Activated CD4-positive, alpha-beta T cell treated with anti-CD3 and anti-CD28 coated beads for 36 hours (primary cell): ENCODE measurements at regions of chr20 and their contacts with region 1.

Region 1: GRCh38 chr20:32336918-32337347 is 21.2 kb upstream of the ASXL1 start:
- DNase-seq: no peak
- ATAC-seq: no peak
- H3K4me3 Mint-ChIP-seq: no peak overlapping the region
- H3K27ac Mint-ChIP-seq: no peak overlapping the region
- H3K4me1 Mint-ChIP-seq: peaks cover 41% of the 10 kb centered on the region
- H3K27me3 Mint-ChIP-seq: no peaks in the 10 kb centered on the region

Region 2: GRCh38 chr20:32231847-32232246 is 105.1 kb before region 1 on chr20:
- CTCF ChIA-PET with region 1: no interaction called
- POLR2A ChIA-PET with region 1: interaction called, 3 read pairs
- intact Hi-C with region 1: loop called (anchors 1 kb)
- DNase-seq: peak; percentile 68
- ATAC-seq: peak; percentile 89
- H3K4me3 Mint-ChIP-seq: peak overlapping the region; percentile 52
- H3K27ac Mint-ChIP-seq: peak overlapping the region; percentile 98
- H3K4me1 Mint-ChIP-seq: peaks cover 42% of the 10 kb centered on the region
- H3K27me3 Mint-ChIP-seq: no peaks in the 10 kb centered on the region

Region 3: GRCh38 chr20:32285621-32286371 is 51.1 kb before region 1 on chr20:
- CTCF ChIA-PET with region 1: interaction called, 7 read pairs
- POLR2A ChIA-PET with region 1: interaction called, 9 read pairs
- intact Hi-C with region 1: loop called (anchors 1 to 2 kb)
- DNase-seq: peak; percentile 70
- ATAC-seq: peak; percentile 83
- H3K4me3 Mint-ChIP-seq: peak overlapping the region; percentile 58
- H3K27ac Mint-ChIP-seq: peak overlapping the region; percentile 97
- H3K4me1 Mint-ChIP-seq: peaks cover 88% of the 10 kb centered on the region
- H3K27me3 Mint-ChIP-seq: no peaks in the 10 kb centered on the region

Region 4: GRCh38 chr20:32352121-32352720 is 15.3 kb after region 1 on chr20:
- CTCF ChIA-PET with region 1: interaction called, 8 read pairs
- POLR2A ChIA-PET with region 1: interaction called, 4 read pairs
- intact Hi-C with region 1: loop called (anchors 1 kb)
- DNase-seq: no peak
- ATAC-seq: no peak
- H3K4me3 Mint-ChIP-seq: no peak overlapping the region
- H3K27ac Mint-ChIP-seq: no peak overlapping the region
- H3K4me1 Mint-ChIP-seq: peaks cover 32% of the 10 kb centered on the region
- H3K27me3 Mint-ChIP-seq: no peaks in the 10 kb centered on the region

Region 5: DNA sequence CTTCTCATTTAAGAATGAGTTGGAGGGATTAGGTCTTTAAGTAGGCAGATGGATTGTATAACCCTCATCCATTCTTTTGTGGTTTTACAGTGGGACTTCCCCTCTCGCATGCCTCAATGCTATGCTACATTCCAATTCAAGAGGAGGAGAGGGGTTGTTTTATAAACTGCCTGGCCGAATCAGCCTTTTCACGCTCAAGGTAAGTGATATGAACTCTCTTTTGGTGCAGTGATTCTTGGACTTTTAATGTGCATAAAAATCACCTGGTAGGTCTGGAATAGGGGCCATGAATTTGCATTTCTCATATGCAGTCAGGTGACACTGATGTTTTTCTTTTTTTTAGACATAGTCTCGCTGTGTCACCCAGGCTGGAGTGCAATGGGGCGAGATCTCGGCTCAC is 32.0 kb after region 1 on chr20:
- CTCF ChIA-PET with region 1: no interaction called
- POLR2A ChIA-PET with region 1: no interaction called
- intact Hi-C with region 1: loop called (anchors 5 kb)
- DNase-seq: no peak
- ATAC-seq: peak; percentile 47
- H3K4me3 Mint-ChIP-seq: no peak overlapping the region
- H3K27ac Mint-ChIP-seq: peak overlapping the region; percentile 43
- H3K4me1 Mint-ChIP-seq: peaks cover 49% of the 10 kb centered on the region
- H3K27me3 Mint-ChIP-seq: no peaks in the 10 kb centered on the region

Region 6: DNA sequence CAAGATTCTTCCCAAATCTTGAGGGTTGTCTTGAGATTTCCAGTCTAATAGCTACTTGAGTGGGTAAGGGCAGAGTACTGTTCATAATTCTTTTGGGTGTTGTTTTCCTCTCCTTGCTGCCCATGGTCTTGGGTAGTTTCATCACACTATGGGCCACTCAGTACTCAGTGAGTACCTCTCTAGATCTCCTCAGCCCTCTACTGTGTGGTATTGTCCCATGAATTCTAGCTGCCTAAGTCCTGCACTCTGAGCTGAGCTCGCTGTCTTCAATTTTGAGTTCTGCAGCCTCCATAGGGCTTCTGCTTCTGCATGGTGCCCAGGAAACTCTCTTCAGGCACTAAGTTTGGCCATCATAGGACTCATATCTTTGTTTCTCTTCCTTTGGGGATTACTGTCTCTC is 63.5 kb after region 1 on chr20:
- CTCF ChIA-PET with region 1: no interaction called
- POLR2A ChIA-PET with region 1: no interaction called
- intact Hi-C with region 1: no loop called
- DNase-seq: no peak
- ATAC-seq: no peak
- H3K4me3 Mint-ChIP-seq: no peak overlapping the region
- H3K27ac Mint-ChIP-seq: no peak overlapping the region
- H3K4me1 Mint-ChIP-seq: peaks cover 41% of the 10 kb centered on the region
- H3K27me3 Mint-ChIP-seq: no peaks in the 10 kb centered on the region